H1 (cell line): ENCODE measurements at regions of chr4 and their contacts with region 1.

Region 1: DNA sequence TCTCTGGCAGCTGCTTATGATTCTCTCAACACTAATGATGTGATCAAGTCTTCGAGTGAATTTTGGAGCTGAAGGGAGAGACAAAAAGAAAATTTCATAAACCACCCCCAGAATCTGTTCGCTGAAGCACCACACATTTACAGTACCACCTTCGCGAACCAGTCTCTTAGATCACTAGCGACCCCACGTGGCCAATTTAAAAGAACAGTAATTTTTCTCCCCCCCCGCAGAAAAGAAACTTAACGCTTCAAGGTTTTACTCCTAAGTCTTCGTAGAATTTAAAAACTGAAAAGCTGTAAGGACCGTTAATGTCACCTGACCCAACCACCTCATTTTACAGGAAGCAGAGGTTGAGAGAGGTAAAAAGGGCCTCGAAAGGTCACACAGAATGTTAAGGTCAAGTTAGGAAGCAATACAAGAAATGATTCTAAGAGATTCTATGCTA is 187.5 kb downstream of the QDPR start:
- DNase-seq: peak in 1 of 2 experiments; percentile 72
- H3K4me3 ChIP-seq: no peak overlapping the region
- H3K27ac ChIP-seq: no peak overlapping the region
- H3K4me1 ChIP-seq: peaks cover 0 to 7% (median 3%) of the 10 kb centered on the region in 4 experiments; a peak in 1 of 7 replicates
- H3K27me3 ChIP-seq: 0 out of 7 replicates have a peak, but pooled peaks cover 0 to 3% (median 0%) of the 10 kb centered on the region in 4 experiments
- CTCF ChIP-seq: peak in 2 of 3 experiments; percentile 46 to 67; a peak in 3 of 4 replicates
- EP300 ChIP-seq: no peak
- POLR2A ChIP-seq: no peak
- RAD21 ChIP-seq: peak; percentile 91

Region 2: GRCh38 chr4:17280261-17281018 is 44.0 kb before region 1 on chr4:
- CTCF ChIA-PET with region 1: interaction called, 18 read pairs
- POLR2A ChIA-PET with region 1: no interaction called
- DNase-seq: no peak
- H3K4me3 ChIP-seq: no peak overlapping the region
- H3K27ac ChIP-seq: no peak overlapping the region
- H3K4me1 ChIP-seq: no peaks in the 10 kb centered on the region; a peak in 1 of 7 replicates
- H3K27me3 ChIP-seq: no peaks in the 10 kb centered on the region; a peak in 2 of 7 replicates
- CTCF ChIP-seq: peak; percentile 10 to 39 (median 32); a peak in 3 of 4 replicates
- EP300 ChIP-seq: no peak
- POLR2A ChIP-seq: no peak
- RAD21 ChIP-seq: peak; percentile 57 to 71